ENCODE measurements at regions of chr3 and their contacts with region 1.

Region 1: DNA sequence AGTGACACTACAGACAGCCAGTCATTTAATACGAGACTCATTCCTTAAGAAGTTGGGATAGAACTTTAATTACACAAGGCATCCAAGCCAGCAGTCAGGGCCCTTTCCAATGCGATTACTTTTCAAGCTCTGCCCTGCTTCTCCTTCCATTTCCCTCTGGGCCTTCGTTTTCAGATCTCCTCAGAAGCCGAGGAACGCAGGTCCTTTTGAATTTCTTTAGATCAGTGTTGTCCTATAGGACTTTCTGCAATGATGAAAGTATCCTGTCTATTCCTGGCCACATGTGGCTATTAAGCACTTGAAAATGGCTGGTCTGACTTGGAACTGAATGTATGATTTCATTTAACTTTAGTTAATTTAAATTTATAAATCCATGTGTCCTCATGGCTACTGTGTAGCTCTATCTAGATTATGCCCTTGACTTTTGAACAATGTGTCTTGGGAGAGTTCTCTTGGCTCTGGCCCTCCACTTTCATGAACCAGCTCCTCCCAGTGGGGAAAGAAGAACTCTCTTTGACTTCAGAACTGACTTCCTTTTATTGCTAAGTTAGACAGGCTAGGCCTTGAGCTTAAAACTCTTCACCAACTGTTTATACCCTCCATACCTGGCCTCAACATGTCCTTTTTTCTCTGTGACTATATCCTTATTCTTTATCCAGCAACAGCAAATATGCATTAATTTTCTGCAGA is 22.6 kb downstream of the TGFBR2 start:
- DNase-seq: peak; percentile 75
- H3K4me3 ChIP-seq: peak overlapping the region; percentile 37
- H3K27ac ChIP-seq: peak overlapping the region; percentile 81
- H3K4me1 ChIP-seq: peaks cover 99% of the 10 kb centered on the region
- CTCF ChIP-seq: peak; percentile 81

Region 2: DNA sequence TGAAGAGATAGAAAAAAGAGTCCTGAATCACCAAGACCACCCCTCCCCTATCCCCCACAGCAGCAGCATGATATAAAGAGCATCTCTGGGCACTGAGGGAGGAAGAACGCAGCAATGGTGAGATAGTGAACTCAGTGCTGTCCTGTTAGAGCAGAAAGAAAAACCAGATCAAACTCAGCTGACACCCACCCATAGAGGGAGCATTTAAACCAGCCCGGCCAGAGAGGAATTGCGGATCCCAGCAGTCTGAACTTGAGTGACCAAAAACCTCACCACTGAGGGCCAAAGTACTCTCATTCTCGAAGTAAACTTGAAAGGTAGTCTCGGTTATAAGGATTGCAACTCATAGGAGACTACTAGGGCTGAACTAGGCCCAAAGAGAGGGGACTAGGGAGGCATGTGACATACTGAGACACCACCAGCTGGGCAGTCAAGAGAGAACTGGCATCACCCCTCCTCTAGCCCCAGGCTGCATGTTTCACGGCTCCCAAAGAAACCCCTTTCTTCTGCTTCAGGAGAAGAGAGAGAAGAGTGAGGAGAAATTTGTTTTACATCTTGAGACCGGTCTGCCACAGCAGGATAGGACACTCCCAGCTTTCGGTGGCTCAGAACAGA is 61.8 kb before region 1 on chr3:
- CTCF ChIA-PET with region 1: no interaction called
- POLR2A ChIA-PET with region 1: no interaction called
- intact Hi-C with region 1: no loop called
- DNase-seq: no peak
- H3K4me3 ChIP-seq: no peak overlapping the region
- H3K27ac ChIP-seq: no peak overlapping the region
- H3K4me1 ChIP-seq: no peaks in the 10 kb centered on the region
- CTCF ChIP-seq: 0 out of 2 replicates have a peak, but pooled peaks have one; percentile 23

Region 3: GRCh38 chr3:30606301-30607031 is 22.6 kb before region 1 on chr3 and contains the start of gene TGFBR2:
- CTCF ChIA-PET with region 1: no interaction called
- POLR2A ChIA-PET with region 1: interaction called, 76 read pairs
- intact Hi-C with region 1: loop called (anchors 2 kb)
- DNase-seq: peak; percentile 91
- H3K4me3 ChIP-seq: peak within 1 kb of the TSS; percentile 94
- H3K27ac ChIP-seq: peak within 1 kb of the TSS; percentile 93
- H3K4me1 ChIP-seq: peaks cover 72% of the 10 kb centered on the region
- CTCF ChIP-seq: no peak; the same call in 1 of the 2 replicates
- total RNA-seq, gene TGFBR2: 28.1 and 29.6 TPM in 2 replicates

Region 4: DNA sequence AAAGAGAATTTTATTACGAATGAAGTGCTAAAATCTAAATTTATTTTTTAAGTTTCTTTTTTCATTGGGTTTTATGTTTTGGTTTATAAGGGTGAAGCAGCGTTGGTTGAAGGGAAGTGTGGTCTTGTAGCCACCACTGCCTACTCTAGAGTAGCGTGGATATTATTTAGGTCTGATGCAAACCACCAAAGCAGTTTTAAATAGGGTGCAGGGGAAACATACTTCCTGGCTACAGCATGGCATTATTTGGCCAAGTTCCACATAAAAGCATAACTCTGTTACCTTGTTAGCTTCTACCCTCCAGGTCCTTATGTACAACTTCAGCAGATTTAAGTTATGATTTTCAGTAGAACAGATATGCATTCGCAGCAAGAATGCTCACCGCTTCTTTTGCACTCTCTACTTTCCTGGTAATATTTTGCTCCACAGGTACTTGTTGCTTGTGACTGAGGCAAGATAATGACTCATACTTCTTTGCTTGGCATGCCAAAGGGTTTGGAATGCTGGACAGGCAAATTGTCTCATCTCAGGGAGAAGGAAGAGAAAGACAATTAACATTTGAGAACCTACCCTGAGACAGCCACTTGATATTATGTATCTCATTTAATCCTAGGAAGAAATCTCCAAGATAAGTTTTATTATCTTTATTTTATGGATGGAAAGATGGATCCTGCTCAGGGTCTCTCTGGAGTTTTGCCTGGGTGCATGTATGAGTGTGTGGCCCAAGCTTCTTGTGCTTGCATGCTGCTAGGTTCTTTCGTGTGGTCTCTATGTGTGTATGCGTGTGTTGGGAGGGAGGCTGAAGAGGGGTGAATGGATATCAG is 17.2 kb before region 1 on chr3:
- CTCF ChIA-PET with region 1: interaction called, 3 read pairs
- POLR2A ChIA-PET with region 1: interaction called, 76 read pairs
- intact Hi-C with region 1: loop called (anchors 2 kb)
- DNase-seq: peak; percentile 56
- H3K4me3 ChIP-seq: peak overlapping the region; percentile 94
- H3K27ac ChIP-seq: peak overlapping the region; percentile 69
- H3K4me1 ChIP-seq: peaks cover 77% of the 10 kb centered on the region
- CTCF ChIP-seq: no peak

Region 5: DNA sequence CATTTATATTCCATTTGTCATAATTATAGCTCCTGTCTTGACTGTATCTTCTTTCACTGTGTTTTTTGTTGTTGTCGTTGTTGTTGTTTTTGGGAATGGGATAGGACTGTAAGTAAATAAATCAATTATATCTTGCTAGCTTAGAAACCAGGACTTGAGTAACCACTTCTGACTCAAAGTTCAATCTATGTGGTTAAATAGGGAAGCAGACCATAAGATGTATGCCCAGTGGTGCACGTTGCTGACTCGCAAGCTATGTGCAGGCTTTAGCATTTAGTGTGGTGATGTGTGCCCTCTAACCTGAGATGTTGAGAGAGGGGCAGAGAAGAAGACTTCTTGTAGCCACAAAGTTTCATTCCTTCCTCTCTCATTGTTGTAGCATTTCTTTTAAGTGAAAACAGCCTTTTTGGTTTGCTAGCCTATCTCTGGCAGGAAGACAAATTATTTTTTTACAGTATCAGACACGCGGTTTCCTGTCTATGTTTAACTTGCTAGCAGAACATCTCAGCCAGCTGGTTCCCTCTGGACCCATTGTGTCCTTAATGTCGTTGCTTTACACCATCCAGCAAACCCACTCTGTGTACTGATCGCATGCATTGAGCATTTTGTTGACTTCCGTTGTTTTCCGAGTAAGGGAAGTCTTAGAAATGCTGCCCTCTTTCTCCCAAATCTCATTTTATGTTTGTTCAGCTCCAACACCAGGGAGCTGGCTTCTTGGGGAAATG is 29.4 kb after region 1 on chr3:
- CTCF ChIA-PET with region 1: no interaction called
- POLR2A ChIA-PET with region 1: interaction called, 10 read pairs
- intact Hi-C with region 1: no loop called
- DNase-seq: peak; percentile 73
- H3K4me3 ChIP-seq: peak overlapping the region; percentile 28
- H3K27ac ChIP-seq: peak overlapping the region; percentile 77
- H3K4me1 ChIP-seq: peaks cover 76% of the 10 kb centered on the region
- CTCF ChIP-seq: no peak

Measured in OCI-LY7 (cell line).